Activated T-helper 1 cell treated with anti-CD3 and anti-CD28 coated beads, Interleukin-12 subunit alpha, Interleukin-12 subunit beta, Interleukin-2, Interleukin-4 antibody, amounts not matched to agents 30 ng/mL and 10 ng/mL and 1 ng/mL, durations not matched to agents 14 hours and 24 hours and 36 hours (primary cell): ENCODE measurements at regions of chr3 and their contacts with region 1.

Region 1: DNA sequence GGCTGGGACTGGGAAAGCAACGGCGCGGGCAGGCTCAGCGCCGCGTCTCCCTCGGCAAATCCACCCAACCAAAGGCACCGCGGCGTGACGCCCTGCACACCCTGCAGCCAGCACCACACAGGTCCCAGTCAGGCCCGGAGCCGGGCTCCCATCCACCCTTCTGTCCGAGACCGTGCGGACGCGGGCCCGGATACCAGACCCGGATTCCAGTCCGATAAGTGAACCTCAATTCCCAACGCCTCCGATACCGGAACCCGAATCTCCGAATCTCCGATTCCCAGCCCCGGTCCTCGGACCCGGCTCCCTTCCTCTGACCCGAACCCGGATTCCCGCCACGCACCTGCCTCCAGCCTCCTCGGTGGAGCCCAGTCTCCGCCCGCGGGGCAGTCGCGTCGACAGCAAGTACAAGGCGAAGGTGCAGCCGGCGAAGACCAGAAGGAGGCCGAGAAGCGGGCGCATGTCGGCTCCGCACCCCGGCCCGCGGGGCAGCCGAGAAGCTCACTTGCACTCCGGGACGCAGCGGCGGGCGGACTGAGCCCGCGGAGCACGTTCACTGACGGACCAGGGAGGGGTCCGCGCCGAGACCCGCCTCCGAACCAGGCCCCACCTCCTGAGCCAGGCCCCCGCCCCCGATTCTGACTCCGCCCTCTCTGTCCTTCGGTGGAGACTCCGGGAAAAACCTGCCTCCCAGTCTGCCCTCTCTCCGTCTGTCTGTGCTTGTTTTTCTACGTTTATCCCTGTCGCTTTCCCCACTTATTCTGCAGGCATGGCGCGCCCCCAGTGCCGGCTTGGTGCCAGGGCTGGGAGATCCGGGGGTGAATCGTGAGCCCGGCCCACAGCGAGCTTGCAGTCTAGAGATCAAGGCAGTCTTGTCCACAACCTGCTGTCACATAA is at the start of gene TMEM41A:
- DNase-seq: peak; percentile 87
- H3K4me3 Mint-ChIP-seq: peak within 1 kb of the TSS; percentile 97
- H3K27ac Mint-ChIP-seq: peak within 1 kb of the TSS; percentile 90
- H3K4me1 Mint-ChIP-seq: peaks cover 21% of the 10 kb centered on the region
- H3K27me3 Mint-ChIP-seq: peaks cover 10% of the 10 kb centered on the region
- total RNA-seq, gene TMEM41A: 24.6 and 26.6 TPM in 2 replicates

Region 2: DNA sequence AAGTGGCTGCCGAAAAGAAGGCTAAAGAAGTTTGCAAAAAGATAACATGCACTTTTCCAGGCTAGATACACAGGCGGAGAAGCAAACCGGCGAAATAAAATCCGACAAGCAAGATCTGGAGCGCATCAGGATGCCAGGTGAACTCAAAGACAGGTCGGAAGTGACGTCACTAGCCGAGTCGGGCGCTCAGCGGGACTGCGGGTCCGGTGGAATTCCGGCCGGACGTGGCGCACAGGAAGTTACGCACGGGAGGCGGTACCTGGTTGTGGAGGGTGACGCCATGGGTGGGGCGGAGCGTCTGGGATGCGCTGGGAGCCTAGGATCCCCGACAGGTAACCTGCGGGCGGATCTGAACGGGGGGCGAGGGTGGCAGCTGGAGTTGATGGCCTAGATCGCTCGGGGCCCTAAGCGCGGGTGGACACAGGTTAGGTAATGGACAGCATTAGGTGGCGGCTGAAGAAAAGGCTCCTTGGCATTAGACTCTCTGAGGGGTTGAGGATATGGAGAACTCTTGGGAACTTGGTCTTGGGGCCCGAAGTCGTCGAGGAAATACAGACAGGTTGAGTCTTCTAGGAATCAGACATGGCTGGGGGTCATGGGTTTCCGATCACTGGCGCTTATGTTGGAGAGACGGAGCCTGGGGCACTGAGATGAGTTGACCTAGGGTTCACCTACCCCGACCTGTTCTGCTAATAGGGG is 215.9 kb before region 1 on chr3:
- intact Hi-C with region 1: loop called (anchors 1 kb)
- DNase-seq: peak; percentile 91
- H3K4me3 Mint-ChIP-seq: peak overlapping the region; percentile 96
- H3K27ac Mint-ChIP-seq: peak overlapping the region; percentile 80
- H3K4me1 Mint-ChIP-seq: peaks cover 19% of the 10 kb centered on the region
- H3K27me3 Mint-ChIP-seq: peaks cover 3% of the 10 kb centered on the region

Region 3: GRCh38 chr3:185353823-185354614 is 144.7 kb before region 1 on chr3:
- intact Hi-C with region 1: loop called (anchors 5 kb)
- DNase-seq: peak; percentile 68
- H3K4me3 Mint-ChIP-seq: no peak overlapping the region
- H3K27ac Mint-ChIP-seq: no peak overlapping the region
- H3K4me1 Mint-ChIP-seq: no peaks in the 10 kb centered on the region
- H3K27me3 Mint-ChIP-seq: peaks cover 22% of the 10 kb centered on the region

Region 4: DNA sequence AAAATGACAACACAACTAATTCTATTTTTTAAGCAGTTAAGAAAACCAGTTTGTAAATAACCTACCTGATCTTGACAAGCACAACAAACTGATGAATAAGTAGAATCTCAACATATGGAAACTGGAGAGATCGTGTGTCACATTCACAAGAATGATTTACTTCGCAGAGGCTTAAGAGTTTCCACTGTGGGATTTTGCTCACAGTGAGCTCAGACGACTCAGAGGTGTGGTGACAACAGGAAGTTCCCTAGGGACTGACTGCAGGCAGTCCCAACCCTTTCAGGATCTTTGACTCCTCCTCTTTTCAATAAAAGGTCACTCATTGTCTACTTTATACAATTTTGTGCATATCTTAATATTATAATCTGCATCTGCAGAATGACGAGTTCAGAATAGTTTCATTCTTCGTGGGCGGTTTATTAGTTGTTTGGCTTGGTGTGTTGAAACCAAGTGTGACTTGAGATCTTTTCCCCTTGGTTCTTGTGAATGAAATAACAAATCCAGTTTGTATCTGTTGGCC is 53.7 kb after region 1 on chr3 and contains the start of gene LIPH:
- intact Hi-C with region 1: loop called (anchors 2 kb)
- DNase-seq: no peak
- H3K4me3 Mint-ChIP-seq: no peak within 1 kb of the TSS
- H3K27ac Mint-ChIP-seq: peak within 1 kb of the TSS; percentile 42
- H3K4me1 Mint-ChIP-seq: peaks cover 9% of the 10 kb centered on the region
- H3K27me3 Mint-ChIP-seq: no peaks in the 10 kb centered on the region
- total RNA-seq, gene LIPH: not detected in 2 replicates

Region 5: DNA sequence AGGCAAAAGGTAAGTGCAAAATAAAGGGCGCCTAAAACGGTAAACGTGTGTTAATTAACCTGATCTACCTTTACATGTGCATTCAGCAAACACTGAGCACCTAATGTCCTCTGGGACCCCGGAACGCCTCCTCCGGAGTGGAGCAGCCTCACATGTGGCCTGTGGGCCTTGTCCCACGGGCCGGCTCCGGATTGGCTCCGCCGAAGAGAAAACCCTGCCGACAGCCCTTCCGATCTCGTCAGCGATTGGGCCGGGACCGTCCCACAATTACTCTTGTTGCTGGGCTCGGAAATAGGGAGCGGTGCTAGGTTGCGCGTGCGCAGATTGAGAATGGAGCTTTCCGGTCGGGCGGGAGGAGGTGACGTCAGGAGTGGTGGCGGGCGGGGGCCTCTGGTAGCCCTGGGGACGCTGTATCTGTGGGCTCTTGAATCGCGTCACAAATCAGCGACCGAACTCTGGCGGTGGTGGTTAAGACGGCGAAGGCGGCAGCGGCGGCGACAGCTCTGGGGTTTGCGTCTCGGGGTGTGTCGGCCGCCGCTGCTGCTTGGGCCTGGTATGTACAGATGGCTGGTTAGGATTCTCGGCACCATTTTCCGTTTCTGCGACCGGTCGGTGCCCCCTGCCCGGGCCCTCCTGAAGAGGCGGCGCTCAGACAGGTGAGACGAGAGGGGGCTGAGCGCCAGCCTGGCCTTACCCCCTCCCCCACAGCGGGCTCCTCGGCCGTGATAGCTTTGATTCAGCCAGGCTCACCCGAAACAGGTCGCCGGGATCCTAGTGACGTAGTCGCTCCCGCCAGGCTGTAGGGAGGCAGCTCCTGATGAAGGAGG is 87.3 kb after region 1 on chr3 and contains the start of gene SENP2:
- intact Hi-C with region 1: loop called (anchors 1 kb)
- DNase-seq: peak; percentile 99
- H3K4me3 Mint-ChIP-seq: peak within 1 kb of the TSS; percentile 86
- H3K27ac Mint-ChIP-seq: peak within 1 kb of the TSS; percentile 86
- H3K4me1 Mint-ChIP-seq: peaks cover 20% of the 10 kb centered on the region
- H3K27me3 Mint-ChIP-seq: no peaks in the 10 kb centered on the region
- total RNA-seq, gene SENP2: 33.5 and 34.6 TPM in 2 replicates

Region 6: DNA sequence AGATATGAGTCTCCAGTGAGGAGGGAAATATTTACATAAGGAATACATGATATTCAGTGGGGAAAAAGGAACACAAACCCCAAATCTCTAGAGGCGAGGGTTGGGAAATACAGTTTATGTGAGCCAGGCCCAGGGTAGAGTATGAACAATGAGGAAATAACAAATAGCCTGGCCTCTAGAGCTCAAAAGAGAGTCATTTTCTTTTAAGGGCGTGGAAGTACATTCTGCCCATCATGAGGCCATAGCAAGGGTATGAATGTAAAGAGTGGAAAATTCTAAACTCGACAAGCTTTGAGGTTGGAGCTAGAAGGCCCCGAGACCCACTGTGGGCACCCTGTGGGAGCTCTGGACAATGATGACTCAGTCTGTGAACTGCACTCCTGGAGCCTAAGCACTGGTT is 353.9 kb after region 1 on chr3:
- intact Hi-C with region 1: no loop called
- DNase-seq: no peak
- H3K4me3 Mint-ChIP-seq: no peak overlapping the region
- H3K27ac Mint-ChIP-seq: no peak overlapping the region
- H3K4me1 Mint-ChIP-seq: no peaks in the 10 kb centered on the region
- H3K27me3 Mint-ChIP-seq: no peaks in the 10 kb centered on the region

Region 7: DNA sequence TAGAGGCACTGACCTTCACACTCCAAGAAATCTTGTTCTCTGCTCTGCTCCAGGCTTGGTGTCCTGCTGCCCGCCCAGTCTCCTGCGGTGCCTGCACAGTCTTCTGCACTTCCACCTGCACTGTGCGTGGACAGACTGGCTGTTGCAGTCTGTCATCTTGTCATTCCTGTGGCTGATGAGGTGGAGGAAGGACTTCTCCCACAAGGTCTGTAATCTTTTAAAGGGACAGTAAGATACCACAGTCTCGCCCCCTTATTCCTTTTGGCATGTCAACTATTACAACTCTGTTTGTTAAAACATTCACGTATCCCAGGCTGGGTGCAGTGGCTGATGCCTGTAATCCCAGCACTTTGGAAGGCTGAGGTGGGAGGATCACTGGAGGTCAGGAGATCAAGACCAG is 380.2 kb after region 1 on chr3:
- intact Hi-C with region 1: no loop called
- DNase-seq: no peak
- H3K4me3 Mint-ChIP-seq: no peak overlapping the region
- H3K27ac Mint-ChIP-seq: no peak overlapping the region
- H3K4me1 Mint-ChIP-seq: no peaks in the 10 kb centered on the region
- H3K27me3 Mint-ChIP-seq: peaks cover 5% of the 10 kb centered on the region

Region 8: GRCh38 chr3:186746008-186746407 is 1247.3 kb after region 1 on chr3:
- intact Hi-C with region 1: no loop called
- DNase-seq: no peak
- H3K4me3 Mint-ChIP-seq: no peak overlapping the region
- H3K27ac Mint-ChIP-seq: no peak overlapping the region
- H3K4me1 Mint-ChIP-seq: no peaks in the 10 kb centered on the region
- H3K27me3 Mint-ChIP-seq: peaks cover 12% of the 10 kb centered on the region